Activated B cell treated with CpG ODN at 0.5 μM for 24 hours (primary cell): ENCODE measurements at regions of chr12 and their contacts with region 1.

Region 1: DNA sequence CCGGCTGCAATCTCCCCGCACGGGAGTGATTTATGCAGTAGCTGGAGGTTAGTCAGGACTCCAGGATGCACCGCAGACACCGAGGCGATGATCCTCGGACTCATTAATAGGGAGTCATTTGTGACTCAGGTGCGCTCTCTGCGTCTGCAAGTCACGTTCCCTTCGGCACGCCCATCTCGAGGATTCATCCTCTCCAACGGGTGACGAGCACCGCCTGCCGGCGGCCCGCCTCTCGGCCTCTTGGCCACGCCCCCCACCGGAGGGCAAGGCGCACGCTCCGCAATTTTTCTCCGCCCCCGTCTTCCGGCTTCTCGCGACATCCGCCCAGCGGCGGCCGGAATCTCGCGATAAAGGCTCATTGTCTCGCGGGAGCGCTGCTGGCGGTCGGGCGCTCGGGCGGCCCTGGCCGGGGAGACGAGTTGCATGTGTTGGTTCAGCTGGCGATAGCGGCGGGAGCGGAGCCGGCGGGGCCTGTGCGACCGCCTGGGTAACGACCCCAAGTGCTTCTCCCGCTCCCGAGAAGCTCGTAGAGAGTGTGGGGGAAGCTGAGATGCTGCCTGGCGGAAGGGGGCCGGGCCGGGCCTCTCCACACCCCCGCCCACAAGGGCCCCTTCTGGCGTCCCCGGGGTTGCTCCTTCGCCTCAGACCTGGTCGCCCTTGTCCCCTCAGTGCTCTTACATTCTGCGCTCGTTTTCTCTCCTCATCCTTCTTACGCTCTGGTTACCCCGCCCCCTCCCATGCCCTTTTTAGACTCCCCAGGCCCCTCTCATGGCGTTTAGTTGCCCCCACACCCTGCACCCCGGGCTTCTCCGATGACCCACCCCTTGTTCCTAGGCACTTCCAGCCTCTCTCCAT is at the start of gene DENR:
- DNase-seq: peak; percentile 99
- ATAC-seq: peak; percentile 92
- H3K4me3 Mint-ChIP-seq: peak within 1 kb of the TSS; percentile 91
- H3K27ac Mint-ChIP-seq: peak within 1 kb of the TSS; percentile 92
- H3K4me1 Mint-ChIP-seq: peaks cover 46% of the 10 kb centered on the region
- H3K27me3 Mint-ChIP-seq: no peaks in the 10 kb centered on the region
- CTCF ChIP-seq: no peak
- total RNA-seq, gene DENR: 50.5 and 53.3 TPM in 2 replicates

Region 2: GRCh38 chr12:122481861-122482260 is 270.8 kb before region 1 on chr12:
- CTCF ChIA-PET with region 1: no interaction called
- POLR2A ChIA-PET with region 1: no interaction called
- intact Hi-C with region 1: no loop called
- DNase-seq: no peak
- ATAC-seq: no peak
- H3K4me3 Mint-ChIP-seq: no peak overlapping the region
- H3K27ac Mint-ChIP-seq: no peak overlapping the region
- H3K4me1 Mint-ChIP-seq: no peaks in the 10 kb centered on the region
- H3K27me3 Mint-ChIP-seq: no peaks in the 10 kb centered on the region
- CTCF ChIP-seq: no peak

Region 3: DNA sequence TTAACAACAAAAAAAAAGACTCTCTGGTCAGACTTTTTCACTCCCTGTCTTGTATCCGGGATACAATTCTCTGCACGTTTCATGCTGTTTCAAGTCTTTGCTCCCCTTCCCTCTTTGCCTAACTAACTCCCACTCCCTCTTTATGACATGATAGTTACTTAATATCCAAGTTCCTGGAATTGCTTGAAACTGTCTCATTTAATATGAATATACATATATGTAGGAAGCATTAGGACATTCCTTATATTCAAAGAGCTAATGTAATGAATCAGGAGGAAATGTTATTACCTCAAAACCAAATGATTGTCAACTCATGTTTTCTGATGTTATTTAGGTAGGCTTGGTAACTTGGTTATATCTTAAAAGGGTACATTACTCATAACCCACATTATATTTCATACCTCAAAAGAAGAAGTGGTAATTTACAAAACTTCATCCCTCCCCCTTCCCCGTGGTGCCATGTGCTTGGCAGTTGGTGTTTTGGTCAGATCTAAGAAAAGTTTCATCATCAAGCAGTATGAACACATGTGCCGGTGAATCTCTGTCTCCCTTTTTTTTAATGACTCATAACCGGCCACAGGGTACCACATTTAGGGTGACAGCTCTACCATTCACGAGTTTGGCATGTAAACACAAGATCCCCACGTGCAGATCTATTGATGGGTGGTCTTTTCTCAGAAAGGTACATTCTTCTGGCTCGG is 106.0 kb before region 1 on chr12:
- CTCF ChIA-PET with region 1: no interaction called
- POLR2A ChIA-PET with region 1: interaction called, 4 read pairs
- intact Hi-C with region 1: loop called (anchors 1 kb)
- DNase-seq: peak; percentile 21
- ATAC-seq: peak; percentile 84
- H3K4me3 Mint-ChIP-seq: peak overlapping the region; percentile 80
- H3K27ac Mint-ChIP-seq: peak overlapping the region; percentile 91
- H3K4me1 Mint-ChIP-seq: peaks cover 19% of the 10 kb centered on the region
- H3K27me3 Mint-ChIP-seq: no peaks in the 10 kb centered on the region
- CTCF ChIP-seq: no peak

Region 4: GRCh38 chr12:122726080-122726558 is 26.6 kb before region 1 on chr12:
- CTCF ChIA-PET with region 1: interaction called, 3 read pairs
- POLR2A ChIA-PET with region 1: no interaction called
- intact Hi-C with region 1: loop called (anchors 2 kb)
- DNase-seq: no peak
- ATAC-seq: peak; percentile 45
- H3K4me3 Mint-ChIP-seq: peak overlapping the region; percentile 36
- H3K27ac Mint-ChIP-seq: peak overlapping the region; percentile 79
- H3K4me1 Mint-ChIP-seq: peaks cover 33% of the 10 kb centered on the region
- H3K27me3 Mint-ChIP-seq: no peaks in the 10 kb centered on the region
- CTCF ChIP-seq: no peak

Region 5: GRCh38 chr12:123200414-123200813 is 447.7 kb after region 1 on chr12:
- CTCF ChIA-PET with region 1: no interaction called
- POLR2A ChIA-PET with region 1: no interaction called
- intact Hi-C with region 1: no loop called
- DNase-seq: no peak
- ATAC-seq: no peak
- H3K4me3 Mint-ChIP-seq: no peak overlapping the region
- H3K27ac Mint-ChIP-seq: no peak overlapping the region
- H3K4me1 Mint-ChIP-seq: no peaks in the 10 kb centered on the region
- H3K27me3 Mint-ChIP-seq: no peaks in the 10 kb centered on the region
- CTCF ChIP-seq: no peak